ENCODE measurements at regions of chr5 and their contacts with region 1.

Region 1: GRCh38 chr5:93582677-93583438 is at the start of gene NR2F1:
- DNase-seq: peak; percentile 99
- ATAC-seq: peak; percentile 77
- H3K4me3 ChIP-seq: peak within 1 kb of the TSS; percentile 90 to 96 (median 95)
- H3K27ac ChIP-seq: peak within 1 kb of the TSS; percentile 92
- H3K4me1 ChIP-seq: peaks cover 26% of the 10 kb centered on the region
- H3K27me3 ChIP-seq: peaks cover 3 to 22% of the 10 kb centered on the region in 2 experiments; a peak in 3 of 5 replicates
- CTCF ChIP-seq: no peak
- EP300 ChIP-seq: peak; percentile 36 to 47; a peak in 1 of 4 replicates
- POLR2A ChIP-seq: peak in 1 of 2 experiments; percentile 96; a peak in 2 of 4 replicates
- RAD21 ChIP-seq: no peak
- total RNA-seq, gene NR2F1: 14.0 and 17.1 TPM in 2 replicates

Region 2: DNA sequence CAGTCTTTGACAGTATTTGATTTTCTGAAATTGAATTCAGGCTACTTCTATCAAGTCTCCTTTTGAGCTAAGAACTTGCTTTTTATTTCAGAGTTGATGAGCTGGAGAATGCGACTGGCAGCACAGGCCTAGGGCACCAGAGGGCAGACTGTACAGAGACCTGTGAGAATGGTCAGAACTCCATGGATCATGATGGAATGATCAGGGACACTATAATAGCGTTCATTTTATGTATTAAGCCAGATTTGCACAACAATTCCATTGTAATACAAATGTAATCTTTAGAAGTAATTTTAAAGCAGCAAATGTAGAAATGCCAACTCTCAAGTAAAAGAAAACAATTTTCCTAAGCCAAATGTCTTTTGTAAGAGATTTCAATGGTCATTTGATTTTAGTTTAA is 904.2 kb before region 1 on chr5:
- CTCF ChIA-PET with region 1: no interaction called
- POLR2A ChIA-PET with region 1: no interaction called
- in situ Hi-C with region 1: no loop called
- intact Hi-C with region 1: loop called (anchors 5 kb)
- DNase-seq: peak; percentile 4
- ATAC-seq: peak; percentile 75
- H3K4me3 ChIP-seq: no peak overlapping the region
- H3K27ac ChIP-seq: no peak overlapping the region
- H3K4me1 ChIP-seq: no peaks in the 10 kb centered on the region
- H3K27me3 ChIP-seq: no peaks in the 10 kb centered on the region
- CTCF ChIP-seq: peak; percentile 44
- EP300 ChIP-seq: no peak
- POLR2A ChIP-seq: no peak
- RAD21 ChIP-seq: no peak

Region 3: DNA sequence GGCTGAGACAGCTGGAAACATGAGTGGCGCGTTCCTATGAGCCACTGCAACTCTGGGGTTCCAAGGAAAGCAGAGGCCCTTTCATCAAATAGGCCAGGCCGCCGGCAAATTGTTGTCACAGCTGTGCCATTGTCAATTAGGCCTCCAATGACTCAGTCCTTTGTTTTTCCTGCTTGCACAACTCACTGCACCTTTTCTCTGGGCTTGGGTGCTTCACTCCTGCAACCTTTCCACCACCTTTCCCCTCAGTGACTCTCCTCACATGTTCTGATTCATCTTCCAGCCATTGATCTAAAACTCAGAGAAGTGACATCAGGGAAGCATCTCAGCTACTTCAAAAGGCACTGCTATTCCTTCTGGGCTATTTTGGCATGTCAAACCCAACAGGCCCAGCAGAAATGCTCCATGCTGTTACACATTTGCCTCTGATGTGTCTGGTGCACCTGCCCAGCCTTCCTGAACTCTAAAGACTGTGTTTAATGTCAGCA is 655.5 kb before region 1 on chr5:
- CTCF ChIA-PET with region 1: no interaction called
- POLR2A ChIA-PET with region 1: no interaction called
- in situ Hi-C with region 1: no loop called
- intact Hi-C with region 1: loop called (anchors 5 kb)
- DNase-seq: peak; percentile 96
- ATAC-seq: peak; percentile 94
- H3K4me3 ChIP-seq: no peak overlapping the region
- H3K27ac ChIP-seq: peak overlapping the region; percentile 76
- H3K4me1 ChIP-seq: peaks cover 79% of the 10 kb centered on the region
- H3K27me3 ChIP-seq: no peaks in the 10 kb centered on the region
- CTCF ChIP-seq: no peak
- EP300 ChIP-seq: peak; percentile 90 to 96
- POLR2A ChIP-seq: no peak
- RAD21 ChIP-seq: no peak; the same call in 1 of the 2 replicates

Region 4: DNA sequence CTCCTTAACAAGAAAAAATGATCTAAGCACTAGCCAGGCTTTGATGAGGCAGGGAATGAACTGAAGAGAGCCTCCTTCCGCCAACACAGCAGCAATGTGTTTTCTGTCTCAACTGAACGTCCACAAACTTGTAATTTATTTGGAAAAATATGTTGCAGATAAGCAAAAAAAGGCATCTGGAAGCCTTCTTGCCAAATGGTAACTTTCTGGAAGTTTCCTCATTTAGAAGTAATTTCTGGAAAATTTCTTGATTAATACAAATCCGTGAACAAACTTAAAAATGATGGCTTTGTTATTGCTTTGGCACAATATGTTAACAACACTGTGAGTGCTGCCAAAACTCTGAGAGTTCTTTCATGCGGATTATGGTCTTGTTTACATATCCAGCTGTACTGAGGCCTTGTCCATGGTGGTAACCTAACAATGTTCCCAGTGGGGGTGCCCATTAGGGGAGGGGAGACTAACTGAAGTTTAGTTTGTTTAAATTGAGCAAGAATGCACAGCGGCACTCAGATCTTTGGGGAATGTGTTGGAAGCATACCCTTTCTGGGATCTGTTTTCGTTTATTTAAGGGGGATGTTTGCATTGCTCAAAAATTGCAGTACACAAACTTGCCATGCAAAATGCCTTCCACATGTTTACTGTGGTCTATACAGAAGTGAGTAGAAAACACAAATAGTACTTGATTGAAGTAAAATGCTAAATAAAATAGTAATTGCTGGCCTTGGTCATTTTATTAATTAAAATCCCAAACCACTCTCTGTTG is 336.6 kb before region 1 on chr5:
- CTCF ChIA-PET with region 1: no interaction called
- POLR2A ChIA-PET with region 1: interaction called, 3 read pairs
- in situ Hi-C with region 1: no loop called
- intact Hi-C with region 1: loop called (anchors 5 kb)
- DNase-seq: peak; percentile 100
- ATAC-seq: peak; percentile 100
- H3K4me3 ChIP-seq: peak overlapping the region in 1 of 3 experiments; percentile 32; a peak in 1 of 6 replicates
- H3K27ac ChIP-seq: peak overlapping the region; percentile 88
- H3K4me1 ChIP-seq: peaks cover 72% of the 10 kb centered on the region
- H3K27me3 ChIP-seq: no peaks in the 10 kb centered on the region
- CTCF ChIP-seq: no peak
- EP300 ChIP-seq: peak; percentile 86 to 99
- POLR2A ChIP-seq: no peak
- RAD21 ChIP-seq: peak; percentile 18; the same call in 1 of the 2 replicates

Region 5: GRCh38 chr5:93665648-93666047 is 82.8 kb after region 1 on chr5:
- CTCF ChIA-PET with region 1: no interaction called
- POLR2A ChIA-PET with region 1: no interaction called
- in situ Hi-C with region 1: no loop called
- intact Hi-C with region 1: no loop called
- DNase-seq: no peak
- ATAC-seq: no peak
- H3K4me3 ChIP-seq: no peak overlapping the region
- H3K27ac ChIP-seq: no peak overlapping the region
- H3K4me1 ChIP-seq: peaks cover 7% of the 10 kb centered on the region
- H3K27me3 ChIP-seq: no peaks in the 10 kb centered on the region
- CTCF ChIP-seq: no peak
- EP300 ChIP-seq: no peak
- POLR2A ChIP-seq: no peak
- RAD21 ChIP-seq: no peak

Region 6: DNA sequence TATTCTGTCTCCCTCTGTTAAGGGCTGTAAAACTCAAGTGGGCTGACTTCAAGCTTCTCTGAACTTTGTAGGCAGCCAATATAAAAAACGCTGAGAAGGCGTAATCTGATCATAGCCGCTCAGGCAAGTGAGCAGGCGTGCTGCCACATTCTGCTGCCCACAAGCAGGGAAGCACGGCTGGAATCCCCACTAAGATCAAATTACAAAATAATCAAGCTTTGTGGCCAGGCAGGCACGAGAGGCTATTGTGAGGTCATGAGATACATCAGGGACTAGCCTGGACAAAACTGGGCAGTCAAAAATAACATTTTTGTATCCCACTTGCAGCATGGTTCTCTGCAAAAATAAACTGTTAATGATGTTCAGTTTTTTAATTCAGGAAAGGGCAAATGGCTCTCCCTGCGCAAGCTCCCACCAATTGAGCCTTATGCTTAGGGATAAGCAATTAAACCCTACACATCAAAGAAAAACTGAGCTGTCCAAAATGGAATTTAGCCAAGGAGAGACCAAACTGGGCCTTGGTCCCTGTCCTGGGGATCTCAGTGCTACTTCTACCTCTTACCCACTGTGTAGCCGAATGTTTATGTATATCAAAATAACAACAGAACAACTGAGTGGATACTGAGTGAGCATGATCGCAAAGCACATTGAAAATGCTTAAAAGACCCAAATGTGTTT is 94.6 kb after region 1 on chr5:
- CTCF ChIA-PET with region 1: no interaction called
- POLR2A ChIA-PET with region 1: no interaction called
- in situ Hi-C with region 1: no loop called
- intact Hi-C with region 1: loop called (anchors 2 kb)
- DNase-seq: peak; percentile 82
- ATAC-seq: peak; percentile 96
- H3K4me3 ChIP-seq: no peak overlapping the region
- H3K27ac ChIP-seq: no peak overlapping the region
- H3K4me1 ChIP-seq: peaks cover 34% of the 10 kb centered on the region
- H3K27me3 ChIP-seq: no peaks in the 10 kb centered on the region
- CTCF ChIP-seq: no peak
- EP300 ChIP-seq: peak in 1 of 2 experiments; percentile 21; a peak in 1 of 4 replicates
- POLR2A ChIP-seq: no peak
- RAD21 ChIP-seq: no peak

Region 7: DNA sequence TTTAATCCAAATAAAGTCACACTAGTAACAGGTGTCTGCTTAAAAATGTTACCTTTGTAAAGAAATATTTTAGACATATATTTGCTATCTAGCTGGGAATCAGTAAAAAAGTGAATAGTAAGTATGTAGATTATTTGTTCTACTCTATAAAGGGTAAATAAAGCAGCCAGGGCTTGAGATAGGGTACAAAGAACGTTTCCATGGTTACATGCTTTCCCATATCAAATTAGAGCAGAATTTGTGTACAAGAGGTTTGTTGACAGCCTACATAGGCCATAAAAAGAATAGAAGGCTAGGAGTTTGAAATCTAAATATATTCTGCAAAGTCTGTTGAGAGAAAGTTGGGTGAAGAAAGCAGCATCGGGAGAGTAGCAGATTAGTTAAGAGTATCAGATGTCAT is 319.4 kb after region 1 on chr5:
- CTCF ChIA-PET with region 1: no interaction called
- POLR2A ChIA-PET with region 1: no interaction called
- in situ Hi-C with region 1: no loop called
- intact Hi-C with region 1: loop called (anchors 5 kb)
- DNase-seq: peak; percentile 76
- ATAC-seq: peak; percentile 91
- H3K4me3 ChIP-seq: peak overlapping the region in 1 of 3 experiments; percentile 16; a peak in 1 of 6 replicates
- H3K27ac ChIP-seq: peak overlapping the region; percentile 52
- H3K4me1 ChIP-seq: peaks cover 57% of the 10 kb centered on the region
- H3K27me3 ChIP-seq: no peaks in the 10 kb centered on the region
- CTCF ChIP-seq: no peak
- EP300 ChIP-seq: no peak
- POLR2A ChIP-seq: no peak
- RAD21 ChIP-seq: no peak

Region 8: DNA sequence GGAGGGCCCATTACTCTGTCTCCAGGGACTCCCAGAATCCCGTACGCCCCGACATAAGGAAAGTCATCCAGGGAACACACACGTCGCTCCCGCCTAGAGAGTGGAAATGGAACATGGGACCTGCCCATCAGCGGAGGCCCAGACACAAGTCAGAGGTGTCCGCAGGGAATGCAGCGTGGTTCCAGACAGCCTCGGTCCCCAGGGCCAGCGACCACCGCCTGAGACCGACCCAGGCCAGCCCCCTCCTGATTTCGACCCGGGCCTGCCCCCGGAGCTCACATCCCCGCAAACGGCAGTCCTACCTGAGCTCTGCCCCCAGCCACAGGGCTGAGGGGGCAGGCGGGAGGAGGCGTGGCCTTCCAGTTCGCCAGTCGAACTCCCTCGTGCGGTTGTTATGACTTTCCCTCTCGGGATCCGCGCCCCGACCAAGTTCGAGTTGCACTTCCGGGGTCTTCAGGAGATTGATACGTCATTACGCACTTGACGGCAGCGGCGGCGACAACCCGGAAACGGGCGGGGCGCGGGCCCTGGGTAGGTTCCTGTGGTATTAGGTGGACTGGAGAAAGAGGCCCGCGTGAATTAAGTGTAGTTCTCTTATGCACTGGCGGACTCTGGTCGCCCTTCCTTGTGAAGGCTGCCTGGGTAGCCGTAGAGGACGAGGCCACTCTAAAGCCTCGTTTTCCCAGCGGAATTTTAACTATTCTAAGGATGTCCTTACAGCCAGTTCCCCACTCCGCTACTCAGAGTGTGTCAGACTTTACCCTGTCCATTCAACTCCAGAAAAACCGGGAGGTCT is 528.5 kb after region 1 on chr5:
- CTCF ChIA-PET with region 1: no interaction called
- POLR2A ChIA-PET with region 1: no interaction called
- in situ Hi-C with region 1: no loop called
- intact Hi-C with region 1: loop called (anchors 5 kb)
- DNase-seq: peak; percentile 96
- ATAC-seq: peak; percentile 96
- H3K4me3 ChIP-seq: peak overlapping the region; percentile 74 to 94 (median 83)
- H3K27ac ChIP-seq: peak overlapping the region; percentile 85
- H3K4me1 ChIP-seq: peaks cover 30% of the 10 kb centered on the region
- H3K27me3 ChIP-seq: no peaks in the 10 kb centered on the region
- CTCF ChIP-seq: peak; percentile 68
- EP300 ChIP-seq: 0 out of 4 replicates have a peak, but pooled peaks of 1 of the 2 experiments have one; percentile 5
- POLR2A ChIP-seq: peak; percentile 72 to 83
- RAD21 ChIP-seq: no peak

Measured in HepG2 (cell line).